ENCODE measurements at regions of chr17 and their contacts with region 1.

Region 1: DNA sequence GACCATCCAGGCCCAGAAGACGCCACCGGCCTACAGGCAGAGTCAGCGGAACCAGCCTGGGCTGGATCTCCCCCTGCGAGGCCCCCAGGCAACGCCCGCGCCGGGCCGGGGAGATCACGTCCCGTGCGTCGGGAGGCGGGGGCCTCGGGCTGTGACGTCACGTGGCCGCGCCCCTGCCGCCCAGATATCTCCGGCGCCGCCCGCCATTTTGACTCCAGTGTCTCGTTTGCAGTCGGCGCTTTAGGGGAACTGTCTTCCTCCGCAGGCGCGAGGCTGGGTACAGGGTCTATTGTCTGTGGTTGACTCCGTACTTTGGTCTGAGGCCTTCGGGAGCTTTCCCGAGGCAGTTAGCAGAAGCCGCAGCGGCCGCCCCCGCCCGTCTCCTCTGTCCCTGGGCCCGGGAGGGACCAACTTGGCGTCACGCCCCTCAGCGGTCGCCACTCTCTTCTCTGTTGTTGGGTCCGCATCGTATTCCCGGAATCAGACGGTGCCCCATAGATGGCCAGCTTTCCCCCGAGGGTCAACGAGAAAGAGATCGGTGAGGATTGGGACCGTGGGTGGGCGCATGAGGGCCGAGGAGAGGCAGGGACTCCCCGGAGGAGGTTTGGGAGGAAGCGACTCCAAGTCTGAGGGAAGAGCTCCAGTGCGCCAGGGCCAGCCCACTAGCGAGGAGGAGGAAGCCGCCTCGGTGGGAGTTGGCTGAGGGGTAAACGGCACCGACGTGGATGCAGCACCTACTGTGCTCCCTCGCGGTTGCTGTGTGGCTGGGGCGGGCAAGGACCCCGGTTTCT is at the start of gene WSB1:
- DNase-seq: peak; percentile 96
- ATAC-seq: peak; percentile 80
- H3K4me3 Mint-ChIP-seq: peak within 1 kb of the TSS; percentile 97
- H3K27ac Mint-ChIP-seq: peak within 1 kb of the TSS; percentile 98
- H3K4me1 Mint-ChIP-seq: peaks cover 24% of the 10 kb centered on the region
- H3K27me3 Mint-ChIP-seq: no peaks in the 10 kb centered on the region
- total RNA-seq, gene WSB1: 171 to 175 TPM

Region 2: DNA sequence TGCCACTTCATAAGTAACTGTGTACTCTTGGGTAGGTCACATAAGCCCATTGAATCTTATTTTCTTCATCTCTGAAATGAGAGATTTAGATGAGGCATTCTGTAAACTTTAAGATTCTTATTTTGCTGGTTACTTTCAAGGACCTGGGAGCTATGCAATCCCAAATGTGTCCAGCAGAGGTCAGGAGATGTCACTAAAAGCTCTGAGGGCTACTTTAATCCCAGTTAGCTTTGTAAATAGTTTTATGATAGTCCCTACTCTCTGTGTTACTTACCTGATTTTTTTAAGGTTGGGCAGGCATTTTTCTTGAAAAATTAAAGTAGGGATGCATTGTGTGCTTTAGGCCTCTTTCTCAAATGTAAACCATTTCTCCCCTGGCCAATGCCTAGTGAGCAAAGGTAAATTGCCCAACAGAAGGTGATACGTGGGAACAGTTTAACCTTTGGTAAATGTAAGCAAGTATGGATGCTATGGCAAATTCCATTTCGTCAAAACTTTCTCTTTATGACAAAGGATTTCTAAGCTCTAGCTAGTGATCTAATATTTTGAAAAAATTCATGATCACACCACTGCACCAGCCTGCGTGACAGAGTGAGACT is 57.3 kb before region 1 on chr17:
- POLR2A ChIA-PET with region 1: interaction called, 10 read pairs
- DNase-seq: peak; percentile 57
- ATAC-seq: peak; percentile 54
- H3K4me3 Mint-ChIP-seq: no peak overlapping the region
- H3K27ac Mint-ChIP-seq: no peak overlapping the region
- H3K4me1 Mint-ChIP-seq: peaks cover 8% of the 10 kb centered on the region
- H3K27me3 Mint-ChIP-seq: peaks cover 3% of the 10 kb centered on the region

Region 3: DNA sequence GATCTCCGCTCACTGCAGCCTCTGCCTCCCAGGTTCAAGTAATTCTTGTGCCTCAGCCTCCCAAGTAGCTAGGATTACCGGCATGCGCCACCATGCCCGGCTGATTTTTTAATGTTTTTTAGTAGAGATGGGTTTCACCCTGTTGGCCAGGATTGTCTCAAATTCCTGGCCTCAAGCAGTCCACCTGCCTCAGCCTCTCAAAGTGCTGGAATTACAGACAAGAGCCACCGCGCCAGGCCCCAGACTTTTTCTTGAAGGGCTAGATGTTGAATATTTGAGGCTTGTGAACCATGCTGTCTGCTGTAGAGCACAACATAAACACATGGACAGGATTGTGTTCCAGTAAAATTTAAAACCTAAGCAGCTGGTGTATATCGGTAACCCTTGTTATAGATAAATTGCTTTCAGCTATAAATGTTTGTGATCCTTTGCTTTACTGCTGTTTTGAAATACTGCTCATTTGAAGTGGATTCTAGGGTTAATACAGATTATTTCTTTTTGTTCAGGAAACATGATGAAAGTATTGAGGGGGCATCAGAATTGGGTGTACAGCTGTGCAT is 12.3 kb after region 1 on chr17:
- POLR2A ChIA-PET with region 1: interaction called, 11 read pairs
- DNase-seq: no peak
- ATAC-seq: no peak
- H3K4me3 Mint-ChIP-seq: no peak overlapping the region
- H3K27ac Mint-ChIP-seq: no peak overlapping the region
- H3K4me1 Mint-ChIP-seq: peaks cover 7% of the 10 kb centered on the region
- H3K27me3 Mint-ChIP-seq: no peaks in the 10 kb centered on the region

Region 4: DNA sequence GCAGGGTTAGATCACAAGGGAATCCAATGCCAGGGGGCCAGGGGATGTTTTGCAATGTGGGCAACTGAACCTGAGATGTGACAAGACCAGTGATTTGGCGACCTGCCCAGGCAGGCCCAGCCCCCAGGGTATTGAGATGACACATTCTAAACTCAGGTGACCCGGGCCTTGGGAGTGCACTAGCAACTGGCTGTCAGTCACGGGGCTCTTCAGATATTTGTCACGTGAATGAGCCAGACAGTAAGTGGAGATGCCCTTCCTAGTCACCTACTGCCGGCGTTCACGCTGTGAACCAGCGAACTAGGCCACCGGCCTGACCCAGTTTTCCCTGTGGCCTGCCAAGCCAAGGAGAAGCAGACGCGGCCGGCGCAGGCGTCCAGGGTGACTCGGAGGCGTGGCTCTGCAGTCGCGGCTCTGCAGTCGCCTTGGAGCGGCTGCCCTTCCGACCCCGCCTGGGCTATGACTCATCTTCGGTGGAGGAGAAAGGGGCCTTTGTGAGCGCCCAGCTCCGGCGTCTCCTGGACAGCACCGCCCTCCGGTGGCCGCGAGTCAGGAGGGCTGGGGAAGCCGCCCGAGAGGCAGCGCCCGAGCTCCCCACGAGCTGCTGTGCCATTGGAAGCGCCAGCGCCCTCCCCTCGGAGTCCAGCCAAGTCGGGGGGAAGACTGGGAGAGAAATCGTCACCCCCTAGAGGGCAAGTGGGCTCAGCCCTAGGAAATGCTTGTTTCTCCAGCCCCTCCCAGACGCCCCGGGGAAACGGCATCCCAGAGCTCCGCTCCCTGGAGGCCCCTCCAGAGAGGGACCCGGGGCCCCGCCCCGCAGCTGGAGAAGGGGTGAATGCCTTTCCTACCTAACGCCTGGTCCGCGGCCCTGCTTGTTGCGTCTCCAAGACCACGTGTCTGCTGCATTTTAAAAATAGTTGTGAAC is 38.7 kb after region 1 on chr17:
- POLR2A ChIA-PET with region 1: interaction called, 17 read pairs
- DNase-seq: peak; percentile 89
- ATAC-seq: peak; percentile 97
- H3K4me3 Mint-ChIP-seq: peak overlapping the region; percentile 67
- H3K27ac Mint-ChIP-seq: peak overlapping the region; percentile 75
- H3K4me1 Mint-ChIP-seq: peaks cover 11% of the 10 kb centered on the region
- H3K27me3 Mint-ChIP-seq: no peaks in the 10 kb centered on the region

Region 5: GRCh38 chr17:27578718-27579085 is 284.6 kb after region 1 on chr17:
- POLR2A ChIA-PET with region 1: interaction called, 13 read pairs
- DNase-seq: peak; percentile 56
- ATAC-seq: peak; percentile 82
- H3K4me3 Mint-ChIP-seq: peak overlapping the region; percentile 38
- H3K27ac Mint-ChIP-seq: peak overlapping the region; percentile 91
- H3K4me1 Mint-ChIP-seq: peaks cover 64% of the 10 kb centered on the region
- H3K27me3 Mint-ChIP-seq: no peaks in the 10 kb centered on the region